Endothelial cell of umbilical vein (primary cell): ENCODE measurements at regions of chrX and their contacts with region 1.

Region 1: GRCh38 chrX:113929004-113929403 is 654.9 kb upstream of the HTR2C start:
- DNase-seq: peak; percentile 14
- H3K4me3 ChIP-seq: no peak overlapping the region
- H3K27ac ChIP-seq: no peak overlapping the region
- H3K4me1 ChIP-seq: no peaks in the 10 kb centered on the region
- H3K27me3 ChIP-seq: no peaks in the 10 kb centered on the region
- CTCF ChIP-seq: peak; percentile 35 to 38
- POLR2A ChIP-seq: no peak

Region 2: GRCh38 chrX:114611018-114611619 is 682.1 kb after region 1 on chrX:
- CTCF ChIA-PET with region 1: no interaction called
- POLR2A ChIA-PET with region 1: no interaction called
- dilution Hi-C with region 1: no loop called
- intact Hi-C with region 1: loop called (anchors 5 kb)
- DNase-seq: peak; percentile 31
- H3K4me3 ChIP-seq: no peak overlapping the region
- H3K27ac ChIP-seq: no peak overlapping the region
- H3K4me1 ChIP-seq: no peaks in the 10 kb centered on the region
- H3K27me3 ChIP-seq: no peaks in the 10 kb centered on the region
- CTCF ChIP-seq: peak; percentile 40 to 50
- POLR2A ChIP-seq: no peak

Region 3: DNA sequence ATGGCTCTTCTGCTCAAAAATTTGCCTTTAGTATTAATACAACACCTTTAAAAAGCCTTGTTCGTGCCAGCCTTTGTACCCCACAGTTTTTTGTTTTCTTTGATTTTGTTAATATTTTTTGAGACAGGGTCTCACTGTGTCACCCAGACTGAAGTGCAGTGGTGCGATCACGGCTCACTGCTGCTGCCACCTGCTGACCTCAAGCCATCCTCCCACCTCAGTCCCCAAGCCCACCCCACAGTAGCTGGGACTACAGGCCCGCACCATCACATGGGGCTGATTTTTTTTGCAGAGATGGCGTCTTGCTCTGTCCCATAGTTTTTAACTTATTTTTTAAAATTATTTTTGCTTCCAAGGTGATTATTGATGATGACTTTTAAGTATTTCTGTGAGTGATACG is 788.9 kb after region 1 on chrX:
- CTCF ChIA-PET with region 1: no interaction called
- POLR2A ChIA-PET with region 1: no interaction called
- dilution Hi-C with region 1: no loop called
- intact Hi-C with region 1: loop called (anchors 5 kb)
- DNase-seq: no peak
- H3K4me3 ChIP-seq: no peak overlapping the region
- H3K27ac ChIP-seq: no peak overlapping the region
- H3K4me1 ChIP-seq: no peaks in the 10 kb centered on the region
- H3K27me3 ChIP-seq: no peaks in the 10 kb centered on the region
- CTCF ChIP-seq: peak in 1 of 2 donors; percentile 41
- POLR2A ChIP-seq: no peak

Region 4: GRCh38 chrX:114959729-114960128 is 1030.7 kb after region 1 on chrX:
- CTCF ChIA-PET with region 1: interaction called, 5 read pairs
- POLR2A ChIA-PET with region 1: no interaction called
- dilution Hi-C with region 1: no loop called
- intact Hi-C with region 1: loop called (anchors 5 kb)
- DNase-seq: no peak
- H3K4me3 ChIP-seq: no peak overlapping the region
- H3K27ac ChIP-seq: no peak overlapping the region
- H3K4me1 ChIP-seq: no peaks in the 10 kb centered on the region
- H3K27me3 ChIP-seq: no peaks in the 10 kb centered on the region
- CTCF ChIP-seq: no peak
- POLR2A ChIP-seq: no peak